Cardiac septum (tissue), 1 donor: ENCODE measurements at regions of chr2 and their contacts with region 1.

Region 1: GRCh38 chr2:200225951-200226350 is 80.5 kb upstream of the SPATS2L start:
- DNase-seq: no peak

Region 2: GRCh38 chr2:199985625-199986207 is 240.2 kb before region 1 on chr2:
- intact Hi-C with region 1: loop called (anchors 5 kb)
- DNase-seq: no peak

Region 3: GRCh38 chr2:200471324-200471848 is 245.4 kb after region 1 on chr2:
- intact Hi-C with region 1: loop called (anchors 10 kb)
- DNase-seq: no peak